ENCODE measurements at regions of chr14 and their contacts with region 1.

Region 1: GRCh38 chr14:69559581-69560011 is 15.1 kb downstream of the CCDC177 start:
- DNase-seq: no peak
- H3K4me3 ChIP-seq: no peak overlapping the region
- H3K27ac ChIP-seq: no peak overlapping the region
- H3K4me1 ChIP-seq: no peaks in the 10 kb centered on the region
- H3K27me3 ChIP-seq: peaks cover 18 to 24% of the 10 kb centered on the region in 2 experiments
- CTCF ChIP-seq: no peak
- POLR2A ChIP-seq: no peak

Region 2: GRCh38 chr14:69547701-69548348 is 11.8 kb before region 1 on chr14:
- CTCF ChIA-PET with region 1: interaction called, 12 read pairs
- POLR2A ChIA-PET with region 1: no interaction called
- dilution Hi-C with region 1: no loop called
- intact Hi-C with region 1: no loop called
- DNase-seq: no peak
- H3K4me3 ChIP-seq: no peak overlapping the region
- H3K27ac ChIP-seq: no peak overlapping the region
- H3K4me1 ChIP-seq: no peaks in the 10 kb centered on the region
- H3K27me3 ChIP-seq: peaks cover 4 to 14% of the 10 kb centered on the region in 2 experiments
- CTCF ChIP-seq: peak; percentile 76 to 77
- POLR2A ChIP-seq: no peak

Region 3: DNA sequence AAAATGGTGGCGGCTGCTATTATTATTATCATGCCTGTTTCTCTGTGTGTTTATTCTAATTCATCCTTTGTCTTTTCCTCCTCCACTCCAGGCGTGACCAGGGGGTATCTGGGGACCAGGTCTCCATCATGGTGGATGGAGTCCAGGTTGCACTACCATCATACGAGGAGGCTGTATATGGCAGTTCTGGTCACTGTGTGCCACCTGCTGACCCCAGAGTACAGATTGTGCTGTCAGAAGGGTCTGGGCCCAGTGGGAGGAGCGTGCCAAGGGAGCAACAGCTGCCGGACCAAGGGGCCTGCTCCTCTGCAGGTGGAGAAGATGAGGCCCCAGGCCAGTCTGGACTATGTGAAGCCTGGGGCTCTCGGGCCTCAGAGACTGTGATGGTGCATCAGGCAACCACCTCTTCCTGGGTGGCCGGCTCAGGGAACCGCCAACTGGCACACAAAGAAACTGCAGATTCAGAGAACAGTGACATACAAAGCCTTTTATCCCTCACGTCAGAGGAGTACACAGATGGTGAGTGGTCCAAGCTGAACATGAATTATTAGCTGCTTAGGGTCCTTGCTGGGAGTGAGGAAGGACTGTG is 149.1 kb after region 1 on chr14:
- CTCF ChIA-PET with region 1: no interaction called
- POLR2A ChIA-PET with region 1: no interaction called
- dilution Hi-C with region 1: no loop called
- intact Hi-C with region 1: no loop called
- DNase-seq: no peak
- H3K4me3 ChIP-seq: no peak overlapping the region
- H3K27ac ChIP-seq: no peak overlapping the region
- H3K4me1 ChIP-seq: peaks cover 22% of the 10 kb centered on the region
- H3K27me3 ChIP-seq: no peaks in the 10 kb centered on the region
- CTCF ChIP-seq: no peak
- POLR2A ChIP-seq: no peak

Measured in endothelial cell of umbilical vein (primary cell).